ENCODE measurements at regions of chr1 and their contacts with region 1.

Region 1: DNA sequence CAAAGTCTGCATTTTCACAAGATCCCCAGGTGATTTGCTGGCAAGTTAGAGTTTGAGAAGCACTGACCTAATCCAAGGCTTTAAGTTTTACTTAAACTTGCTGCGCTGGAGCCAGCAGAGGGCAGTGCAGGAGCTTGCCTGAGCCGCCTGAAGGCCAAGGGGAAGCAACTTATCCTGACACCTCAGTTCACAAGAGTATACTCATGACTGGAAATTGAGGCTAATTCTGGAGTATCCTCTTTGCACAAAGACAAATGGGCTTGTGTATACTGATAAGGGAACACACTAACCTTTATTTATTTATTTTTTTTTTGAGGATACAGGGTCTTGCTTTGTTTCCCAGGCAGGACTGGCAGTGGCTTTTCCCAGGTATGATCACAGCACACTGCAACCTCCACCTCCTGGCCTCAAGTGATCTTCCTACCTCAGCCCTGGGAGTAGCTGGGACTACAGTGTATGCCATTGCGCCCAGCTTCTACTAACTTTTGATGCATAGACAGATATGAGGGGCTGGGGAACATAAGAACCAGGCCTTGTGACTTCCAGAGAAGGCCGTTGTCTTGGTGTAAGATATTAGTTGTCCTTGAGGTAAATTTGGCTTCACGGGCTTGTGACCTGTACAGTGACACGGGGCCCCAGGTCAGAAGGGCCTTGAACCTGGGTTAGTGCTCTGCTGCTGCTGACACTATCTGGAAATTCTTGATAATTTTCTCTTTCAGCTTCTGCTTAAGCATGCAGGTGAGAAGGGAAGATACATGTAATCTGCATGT is 29.0 kb upstream of the SLAMF1 start:
- DNase-seq: peak; percentile 52 to 74 (median 67)
- ATAC-seq: peak; percentile 92
- H3K4me3 ChIP-seq: no peak overlapping the region
- H3K4me3 Mint-ChIP-seq: peak overlapping the region in 7 of 10 donors; percentile 23 to 54 (median 39)
- H3K27ac ChIP-seq: peak overlapping the region; percentile 56
- H3K27ac Mint-ChIP-seq: peak overlapping the region in 3 of 9 donors; percentile 69 to 93 (median 88)
- H3K4me1 ChIP-seq: peaks cover 26 to 41% of the 10 kb centered on the region in 2 donors
- H3K4me1 Mint-ChIP-seq: peaks cover under 1 to 47% (median 8%) of the 10 kb centered on the region in 7 donors
- H3K27me3 ChIP-seq: no peaks in the 10 kb centered on the region
- H3K27me3 Mint-ChIP-seq: no peaks in the 10 kb centered on the region

Region 2: GRCh38 chr1:160428655-160429054 is 247.2 kb before region 1 on chr1:
- CTCF ChIA-PET with region 1: interaction called, 6 read pairs
- POLR2A ChIA-PET with region 1: no interaction called
- intact Hi-C with region 1: loop called (anchors 2 to 5 kb)
- DNase-seq: peak in 6 of 9 donors; percentile 35 to 61 (median 47)
- ATAC-seq: peak; percentile 54
- H3K4me3 ChIP-seq: no peak overlapping the region
- H3K4me3 Mint-ChIP-seq: peak overlapping the region; percentile 3 to 74 (median 62)
- H3K27ac ChIP-seq: peak overlapping the region; percentile 68
- H3K27ac Mint-ChIP-seq: peak overlapping the region; percentile 84 to 99 (median 91)
- H3K4me1 ChIP-seq: peaks cover 55 to 56% of the 10 kb centered on the region in 2 donors
- H3K4me1 Mint-ChIP-seq: peaks cover 32 to 77% (median 68%) of the 10 kb centered on the region in 7 donors
- H3K27me3 ChIP-seq: no peaks in the 10 kb centered on the region
- H3K27me3 Mint-ChIP-seq: no peaks in the 10 kb centered on the region

Region 3: DNA sequence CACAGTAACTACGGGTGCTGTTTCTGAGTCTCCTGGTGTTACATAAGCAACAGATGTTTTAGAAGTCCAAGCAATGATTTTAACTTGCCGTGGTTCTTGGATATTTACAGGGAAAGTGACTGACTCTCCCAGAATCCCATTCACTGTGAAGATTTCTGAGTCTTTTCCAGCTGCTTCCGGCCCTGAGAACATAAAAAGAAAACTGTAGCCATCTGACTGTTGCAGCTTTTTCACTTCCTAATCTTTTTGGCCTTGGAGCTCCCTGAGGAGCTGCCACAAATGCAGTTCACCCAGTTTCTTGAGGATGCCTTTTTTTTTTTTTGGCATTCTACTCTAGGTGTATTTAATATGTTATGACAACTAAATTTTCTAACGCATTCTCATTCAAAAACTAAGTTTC is 110.3 kb before region 1 on chr1:
- CTCF ChIA-PET with region 1: no interaction called
- POLR2A ChIA-PET with region 1: no interaction called
- intact Hi-C with region 1: no loop called
- DNase-seq: no peak
- ATAC-seq: no peak
- H3K4me3 ChIP-seq: no peak overlapping the region
- H3K4me3 Mint-ChIP-seq: peak overlapping the region in 7 of 10 donors; percentile 18 to 90 (median 34)
- H3K27ac ChIP-seq: no peak overlapping the region
- H3K27ac Mint-ChIP-seq: peak overlapping the region; percentile 12 to 97 (median 86)
- H3K4me1 ChIP-seq: peaks cover 70 to 96% of the 10 kb centered on the region in 2 donors
- H3K4me1 Mint-ChIP-seq: peaks cover 57 to 95% (median 81%) of the 10 kb centered on the region in 7 donors
- H3K27me3 ChIP-seq: no peaks in the 10 kb centered on the region
- H3K27me3 Mint-ChIP-seq: no peaks in the 10 kb centered on the region

Region 4: DNA sequence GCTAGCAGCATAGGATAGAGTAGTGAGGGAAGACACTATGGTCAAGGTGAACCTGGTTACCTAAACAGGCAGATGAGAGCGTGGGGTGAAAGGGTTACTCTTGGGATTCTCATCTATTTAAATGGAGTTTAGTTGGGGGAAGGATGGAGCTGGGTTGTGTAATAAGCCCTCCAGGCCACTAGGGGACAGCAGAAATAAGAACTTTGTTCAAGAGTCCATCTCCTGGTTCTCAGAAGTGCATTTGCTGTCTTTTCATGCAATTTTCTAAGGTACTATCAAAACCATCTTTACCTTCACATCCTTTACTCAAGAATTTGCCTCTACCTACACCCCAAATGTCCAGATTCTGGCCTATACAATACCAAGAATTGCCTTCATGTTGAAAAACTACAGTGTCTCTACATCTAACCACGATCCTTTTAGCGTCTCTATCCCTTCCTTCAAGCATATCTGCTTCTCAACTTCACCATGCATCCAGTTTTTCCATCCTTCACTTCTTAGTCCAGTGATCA is 57.0 kb before region 1 on chr1:
- CTCF ChIA-PET with region 1: interaction called, 67 read pairs
- POLR2A ChIA-PET with region 1: interaction called, 4 read pairs
- intact Hi-C with region 1: loop called (anchors 1 kb)
- DNase-seq: peak in 6 of 9 donors; percentile 34 to 49 (median 46)
- ATAC-seq: peak; percentile 83
- H3K4me3 ChIP-seq: no peak overlapping the region
- H3K4me3 Mint-ChIP-seq: peak overlapping the region in 3 of 10 donors; percentile 2 to 46 (median 24)
- H3K27ac ChIP-seq: no peak overlapping the region
- H3K27ac Mint-ChIP-seq: peak overlapping the region; percentile 21 to 83 (median 69)
- H3K4me1 ChIP-seq: peaks cover 23% of the 10 kb centered on the region in 2 donors
- H3K4me1 Mint-ChIP-seq: peaks cover 32 to 84% (median 68%) of the 10 kb centered on the region in 7 donors
- H3K27me3 ChIP-seq: no peaks in the 10 kb centered on the region
- H3K27me3 Mint-ChIP-seq: no peaks in the 10 kb centered on the region

Region 5: DNA sequence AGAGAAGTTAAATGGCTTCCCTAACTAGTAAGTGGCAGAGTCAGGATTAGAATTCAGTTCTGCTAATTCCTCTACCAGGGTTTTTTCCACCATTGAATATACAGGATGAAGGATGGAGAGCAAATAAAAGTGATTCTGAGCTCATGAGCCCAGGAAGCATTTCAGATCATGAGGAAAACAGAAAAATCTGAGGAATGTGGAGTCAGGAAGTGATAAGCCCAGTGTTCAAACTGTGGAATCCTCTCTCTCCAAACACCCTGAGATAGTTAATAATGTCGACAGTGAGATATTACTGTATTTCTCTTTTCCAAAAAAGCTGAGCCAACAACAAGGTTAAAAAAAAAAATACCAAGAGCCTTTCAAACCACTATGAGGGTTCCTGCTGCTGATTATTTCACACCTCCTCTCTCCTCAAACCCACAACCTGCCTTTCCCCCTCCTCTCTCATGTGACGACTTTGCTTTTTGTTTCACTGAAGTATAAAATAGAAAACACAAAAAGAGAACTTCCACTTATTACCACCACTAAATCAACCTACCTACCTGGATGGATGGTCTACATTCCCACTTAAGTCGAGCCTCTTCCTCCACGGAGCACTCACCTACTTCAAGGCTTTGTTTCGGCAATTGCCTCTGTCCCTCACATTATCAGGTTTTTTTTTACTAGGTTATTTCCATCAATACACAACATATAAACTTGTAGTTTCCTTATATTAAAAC is 37.8 kb before region 1 on chr1:
- CTCF ChIA-PET with region 1: interaction called, 6 read pairs
- POLR2A ChIA-PET with region 1: interaction called, 59 read pairs
- intact Hi-C with region 1: loop called in 1 of 2 experiments (anchors 1 kb)
- DNase-seq: peak in 7 of 9 donors; percentile 63 to 83 (median 74)
- ATAC-seq: peak; percentile 86
- H3K4me3 ChIP-seq: peak overlapping the region; percentile 39
- H3K4me3 Mint-ChIP-seq: peak overlapping the region; percentile 65 to 100 (median 84)
- H3K27ac ChIP-seq: peak overlapping the region; percentile 75
- H3K27ac Mint-ChIP-seq: peak overlapping the region; percentile 92 to 99 (median 95)
- H3K4me1 ChIP-seq: peaks cover 92 to 96% of the 10 kb centered on the region in 2 donors
- H3K4me1 Mint-ChIP-seq: peaks cover 64 to 100% (median 97%) of the 10 kb centered on the region in 7 donors
- H3K27me3 ChIP-seq: no peaks in the 10 kb centered on the region
- H3K27me3 Mint-ChIP-seq: no peaks in the 10 kb centered on the region

Region 6: DNA sequence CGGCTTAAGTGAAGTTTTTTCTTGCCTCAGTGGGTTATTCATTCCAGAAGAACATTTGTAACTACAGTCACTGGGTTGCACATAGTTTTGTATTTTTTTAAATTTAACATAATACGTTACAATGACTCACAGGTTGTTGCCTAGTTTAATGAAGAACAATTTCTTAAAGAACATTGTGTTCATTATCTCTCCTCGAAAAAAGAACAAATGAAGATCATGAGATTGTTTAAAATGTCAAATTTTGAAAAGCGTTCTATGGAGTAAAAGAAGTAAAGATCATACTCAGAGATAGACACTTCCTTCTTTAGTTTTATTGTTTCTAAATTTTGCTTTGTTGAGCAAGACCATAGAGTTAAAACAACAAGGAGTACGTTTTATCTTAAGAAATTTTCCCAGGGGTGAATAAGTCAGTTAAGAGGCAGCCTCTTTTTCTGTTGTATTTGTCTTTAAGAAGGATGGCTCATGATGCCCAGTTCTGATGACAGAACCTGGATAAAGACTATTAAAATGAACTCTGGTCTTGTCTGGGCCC is 18.5 kb before region 1 on chr1:
- CTCF ChIA-PET with region 1: interaction called, 4 read pairs
- POLR2A ChIA-PET with region 1: interaction called, 4 read pairs
- intact Hi-C with region 1: loop called in 1 of 2 experiments (anchors 2 kb)
- DNase-seq: peak in 1 of 9 donors; percentile 29
- ATAC-seq: peak; percentile 29
- H3K4me3 ChIP-seq: no peak overlapping the region
- H3K4me3 Mint-ChIP-seq: peak overlapping the region in 9 of 10 donors; percentile 4 to 61 (median 55)
- H3K27ac ChIP-seq: peak overlapping the region; percentile 44
- H3K27ac Mint-ChIP-seq: peak overlapping the region; percentile 7 to 89 (median 83)
- H3K4me1 ChIP-seq: peaks cover under 1 to 60% of the 10 kb centered on the region in 2 donors
- H3K4me1 Mint-ChIP-seq: peaks cover 39 to 96% (median 84%) of the 10 kb centered on the region in 7 donors
- H3K27me3 ChIP-seq: no peaks in the 10 kb centered on the region
- H3K27me3 Mint-ChIP-seq: no peaks in the 10 kb centered on the region

Region 7: DNA sequence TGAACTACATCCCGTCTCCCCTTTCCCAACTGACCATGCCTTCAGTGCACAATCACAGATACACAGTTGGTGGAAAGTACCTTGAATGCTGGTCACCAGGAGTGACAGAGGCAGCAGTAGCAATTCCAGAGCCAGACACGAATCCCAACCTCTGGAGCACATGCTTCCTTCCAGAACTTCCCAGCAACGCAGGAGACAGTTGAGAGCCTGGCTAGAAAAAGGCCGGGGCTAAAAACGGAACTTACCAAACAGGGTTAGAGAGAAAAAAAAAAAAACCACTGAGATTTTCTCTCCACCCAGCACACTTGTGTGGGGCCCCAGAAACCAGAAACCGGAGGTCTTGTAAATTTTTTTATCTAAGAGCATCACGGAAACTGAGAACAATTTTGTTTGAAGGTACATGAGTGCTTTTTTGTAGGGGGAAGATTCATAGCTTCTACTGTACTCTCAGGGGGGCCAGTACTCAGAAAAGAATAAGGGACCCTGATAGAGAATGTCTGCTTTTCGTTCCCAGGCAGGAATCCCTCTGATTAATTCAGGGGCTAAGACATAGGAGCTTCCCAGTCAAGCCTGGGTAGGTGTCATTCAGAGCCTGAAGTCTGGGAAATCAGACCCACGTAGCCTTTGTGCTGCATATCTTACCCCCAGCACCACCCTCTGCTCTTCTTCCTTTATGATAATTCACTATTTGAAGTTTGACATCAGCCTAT is 35.9 kb after region 1 on chr1 and contains the start of gene CD48:
- CTCF ChIA-PET with region 1: interaction called, 18 read pairs
- POLR2A ChIA-PET with region 1: interaction called, 4 read pairs
- intact Hi-C with region 1: loop called (anchors 1 to 5 kb)
- DNase-seq: peak in 8 of 9 donors; percentile 39 to 88 (median 82)
- ATAC-seq: peak; percentile 67
- H3K4me3 ChIP-seq: peak within 1 kb of the TSS; percentile 90
- H3K4me3 Mint-ChIP-seq: no peak within 1 kb of the TSS
- H3K27ac ChIP-seq: peak within 1 kb of the TSS; percentile 99
- H3K27ac Mint-ChIP-seq: no peak within 1 kb of the TSS
- H3K4me1 ChIP-seq: peaks cover 52 to 60% of the 10 kb centered on the region in 2 donors
- H3K4me1 Mint-ChIP-seq: peaks cover 22 to 49% (median 44%) of the 10 kb centered on the region in 7 donors
- H3K27me3 ChIP-seq: no peaks in the 10 kb centered on the region
- H3K27me3 Mint-ChIP-seq: no peaks in the 10 kb centered on the region
- total RNA-seq, gene CD48: 253 to 438 (median 358) TPM

Region 8: GRCh38 chr1:160768295-160768657 is 92.5 kb after region 1 on chr1:
- CTCF ChIA-PET with region 1: interaction called, 104 read pairs
- POLR2A ChIA-PET with region 1: interaction called, 10 read pairs
- intact Hi-C with region 1: loop called (anchors 1 kb)
- DNase-seq: peak; percentile 66 to 89 (median 82)
- ATAC-seq: peak; percentile 98
- H3K4me3 ChIP-seq: peak overlapping the region; percentile 48
- H3K4me3 Mint-ChIP-seq: peak overlapping the region; percentile 61 to 94 (median 82)
- H3K27ac ChIP-seq: peak overlapping the region; percentile 56
- H3K27ac Mint-ChIP-seq: peak overlapping the region; percentile 89 to 99 (median 96)
- H3K4me1 ChIP-seq: peaks cover 16% of the 10 kb centered on the region in 2 donors
- H3K4me1 Mint-ChIP-seq: peaks cover 19 to 29% (median 21%) of the 10 kb centered on the region in 7 donors
- H3K27me3 ChIP-seq: no peaks in the 10 kb centered on the region
- H3K27me3 Mint-ChIP-seq: no peaks in the 10 kb centered on the region